Caco-2 (cell line): ENCODE measurements at regions of chr17 and their contacts with region 1.

Region 1: DNA sequence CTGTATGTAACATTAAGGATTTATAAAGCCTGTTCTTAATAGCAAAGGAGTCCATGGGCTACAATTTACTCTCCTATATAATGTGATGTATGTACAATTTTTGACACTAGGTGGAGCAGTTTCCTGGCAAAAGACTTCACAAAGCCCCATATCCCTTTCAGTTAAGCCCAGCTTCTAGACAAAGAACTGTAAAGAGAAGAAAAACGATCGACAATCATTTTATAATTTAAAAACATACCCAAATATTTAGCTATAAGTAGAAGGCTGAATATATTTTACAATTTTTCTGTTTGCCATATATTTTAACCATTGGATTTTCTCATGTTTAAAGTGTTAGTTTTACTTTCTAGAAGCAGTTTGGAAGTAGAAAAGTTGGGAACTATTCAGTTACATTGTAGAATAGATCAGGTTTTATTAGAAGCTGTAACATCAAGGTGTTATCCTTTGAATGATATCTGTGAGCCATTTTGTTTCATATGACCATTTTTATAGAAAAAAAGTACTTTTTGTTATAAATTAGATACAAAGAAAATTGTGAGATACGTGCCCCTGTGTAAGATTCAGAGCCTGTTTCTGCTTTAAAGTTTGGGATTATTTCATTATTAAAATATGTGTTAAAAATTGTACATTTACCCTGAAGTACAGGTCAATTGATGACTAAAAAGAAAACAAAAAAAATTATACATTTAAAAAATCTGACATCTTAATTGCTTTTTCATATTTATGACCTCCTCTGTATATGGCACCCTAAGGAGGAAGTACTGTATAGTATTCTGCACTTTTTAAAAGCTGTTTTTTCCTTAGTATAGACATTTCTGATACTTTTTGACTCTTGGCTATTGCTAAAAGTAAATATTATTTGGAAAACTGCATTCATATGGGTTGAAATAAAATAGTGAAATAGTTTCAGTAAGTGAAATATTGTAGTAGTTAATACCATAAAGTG is 46.3 kb downstream of the VMP1 start:
- DNase-seq: peak in 1 of 2 experiments; percentile 77
- H3K4me3 ChIP-seq: no peak overlapping the region
- H3K4me3 Mint-ChIP-seq: peak overlapping the region; percentile 60
- H3K27ac Mint-ChIP-seq: peak overlapping the region; percentile 89
- H3K4me1 ChIP-seq: peaks cover 45% of the 10 kb centered on the region
- H3K4me1 Mint-ChIP-seq: peaks cover 45% of the 10 kb centered on the region
- H3K27me3 ChIP-seq: no peaks in the 10 kb centered on the region
- H3K27me3 Mint-ChIP-seq: no peaks in the 10 kb centered on the region
- CTCF ChIP-seq: peak; percentile 62 to 64

Region 2: GRCh38 chr17:59695945-59696692 is 57.7 kb before region 1 on chr17:
- CTCF ChIA-PET with region 1: no interaction called
- POLR2A ChIA-PET with region 1: no interaction called
- intact Hi-C with region 1: no loop called
- DNase-seq: no peak
- H3K4me3 ChIP-seq: no peak overlapping the region
- H3K4me3 Mint-ChIP-seq: no peak overlapping the region
- H3K27ac Mint-ChIP-seq: peak overlapping the region; percentile 18
- H3K4me1 ChIP-seq: no peaks in the 10 kb centered on the region
- H3K4me1 Mint-ChIP-seq: peaks cover 6% of the 10 kb centered on the region
- H3K27me3 ChIP-seq: no peaks in the 10 kb centered on the region
- H3K27me3 Mint-ChIP-seq: no peaks in the 10 kb centered on the region
- CTCF ChIP-seq: no peak

Region 3: DNA sequence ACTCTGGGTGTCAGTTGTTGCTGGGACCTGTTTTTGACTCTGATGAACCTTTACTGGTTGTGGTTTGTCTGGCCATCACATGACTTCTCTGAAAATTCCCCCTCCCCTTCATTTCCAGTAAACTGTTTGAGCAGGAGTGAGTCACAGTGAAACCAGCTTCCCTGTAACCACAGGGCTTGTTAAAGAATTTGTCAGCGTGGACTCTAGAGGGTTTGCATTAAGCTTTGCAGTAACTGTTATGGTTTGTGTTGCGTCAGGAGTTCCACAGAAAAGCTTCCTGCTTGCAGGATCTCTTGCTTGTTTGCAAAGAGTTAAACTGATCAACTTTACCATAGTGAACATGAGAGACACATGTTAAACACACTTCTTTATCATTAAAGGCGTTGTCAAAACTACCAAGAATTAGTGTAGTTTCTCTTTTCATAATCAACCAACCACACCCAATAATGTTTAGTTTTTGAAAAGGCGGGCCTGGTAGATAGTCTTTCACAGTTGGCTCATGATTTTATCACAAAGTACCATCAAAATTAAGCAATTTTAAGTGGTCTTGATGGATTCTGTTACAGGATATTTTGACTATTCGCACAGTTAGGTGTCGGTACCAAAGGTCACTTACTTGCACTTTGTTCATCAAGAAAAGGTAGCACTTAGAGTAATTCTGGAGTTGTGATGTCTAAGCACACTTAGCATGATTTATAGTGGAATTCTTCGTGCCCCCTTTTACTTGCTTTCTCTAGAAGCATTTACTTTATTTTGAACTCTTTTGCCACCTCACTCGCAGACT is 32.9 kb after region 1 on chr17:
- CTCF ChIA-PET with region 1: interaction called, 8 read pairs
- POLR2A ChIA-PET with region 1: interaction called, 9 read pairs
- intact Hi-C with region 1: loop called (anchors 1 kb)
- DNase-seq: peak; percentile 91 to 93
- H3K4me3 ChIP-seq: peak overlapping the region; percentile 1; the same call in 1 of the 2 replicates
- H3K4me3 Mint-ChIP-seq: peak overlapping the region; percentile 46
- H3K27ac Mint-ChIP-seq: peak overlapping the region; percentile 76
- H3K4me1 ChIP-seq: peaks cover 70% of the 10 kb centered on the region
- H3K4me1 Mint-ChIP-seq: peaks cover 32% of the 10 kb centered on the region
- H3K27me3 ChIP-seq: no peaks in the 10 kb centered on the region
- H3K27me3 Mint-ChIP-seq: no peaks in the 10 kb centered on the region
- CTCF ChIP-seq: no peak

Region 4: GRCh38 chr17:59796785-59797205 is 43.0 kb after region 1 on chr17:
- CTCF ChIA-PET with region 1: no interaction called
- POLR2A ChIA-PET with region 1: no interaction called
- intact Hi-C with region 1: no loop called
- DNase-seq: no peak
- H3K4me3 ChIP-seq: no peak overlapping the region
- H3K4me3 Mint-ChIP-seq: no peak overlapping the region
- H3K27ac Mint-ChIP-seq: no peak overlapping the region
- H3K4me1 ChIP-seq: peaks cover 8% of the 10 kb centered on the region
- H3K4me1 Mint-ChIP-seq: peaks cover 7% of the 10 kb centered on the region
- H3K27me3 ChIP-seq: no peaks in the 10 kb centered on the region
- H3K27me3 Mint-ChIP-seq: no peaks in the 10 kb centered on the region
- CTCF ChIP-seq: no peak

Region 5: DNA sequence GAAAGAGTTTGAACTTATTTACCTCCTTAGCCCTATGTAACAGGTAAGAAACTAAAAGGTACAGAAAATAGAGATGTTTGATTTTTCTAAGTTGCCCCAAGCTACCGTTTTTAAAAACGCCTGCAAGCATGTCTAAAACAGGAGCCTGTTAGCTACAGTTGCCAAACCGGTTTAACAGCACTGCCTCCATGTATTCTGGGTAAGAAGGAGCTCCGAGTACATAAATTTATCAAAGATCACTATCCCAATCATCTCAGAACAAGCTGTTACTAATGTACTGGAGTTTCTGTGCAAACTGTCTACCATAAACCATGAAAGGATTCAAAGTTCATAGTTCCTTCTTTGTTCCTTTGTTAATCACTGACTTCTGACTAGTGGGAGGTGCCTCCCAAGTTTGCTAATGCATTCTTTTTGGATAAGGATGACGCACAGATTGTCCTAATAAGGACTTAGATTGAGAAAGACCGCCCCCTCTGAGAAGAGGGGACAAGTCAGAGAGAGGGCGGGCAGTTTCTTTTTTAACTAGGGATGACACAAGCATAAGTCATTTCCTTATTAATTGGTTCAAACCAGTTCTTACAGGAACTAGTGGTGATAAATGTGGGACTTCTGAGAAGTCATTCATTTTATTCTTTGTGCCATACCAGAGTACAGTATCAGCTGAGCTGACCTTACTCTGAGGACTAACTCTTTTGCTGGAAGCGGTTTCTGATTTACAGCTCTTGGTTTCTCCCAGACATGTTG is 83.7 kb after region 1 on chr17:
- CTCF ChIA-PET with region 1: interaction called, 23 read pairs
- POLR2A ChIA-PET with region 1: interaction called, 17 read pairs
- intact Hi-C with region 1: loop called (anchors 1 kb)
- DNase-seq: peak; percentile 95 to 96
- H3K4me3 ChIP-seq: peak overlapping the region; percentile 49
- H3K4me3 Mint-ChIP-seq: peak overlapping the region; percentile 89
- H3K27ac Mint-ChIP-seq: peak overlapping the region; percentile 98
- H3K4me1 ChIP-seq: peaks cover 30% of the 10 kb centered on the region
- H3K4me1 Mint-ChIP-seq: peaks cover 41% of the 10 kb centered on the region
- H3K27me3 ChIP-seq: no peaks in the 10 kb centered on the region
- H3K27me3 Mint-ChIP-seq: peaks cover 2% of the 10 kb centered on the region
- CTCF ChIP-seq: no peak

Region 6: GRCh38 chr17:59853168-59853918 is 99.5 kb after region 1 on chr17:
- CTCF ChIA-PET with region 1: interaction called, 21 read pairs
- POLR2A ChIA-PET with region 1: interaction called, 3 read pairs
- intact Hi-C with region 1: loop called (anchors 1 kb)
- DNase-seq: peak; percentile 92
- H3K4me3 ChIP-seq: no peak overlapping the region
- H3K4me3 Mint-ChIP-seq: peak overlapping the region; percentile 68
- H3K27ac Mint-ChIP-seq: peak overlapping the region; percentile 97
- H3K4me1 ChIP-seq: peaks cover 78% of the 10 kb centered on the region
- H3K4me1 Mint-ChIP-seq: peaks cover 50% of the 10 kb centered on the region
- H3K27me3 ChIP-seq: no peaks in the 10 kb centered on the region
- H3K27me3 Mint-ChIP-seq: no peaks in the 10 kb centered on the region
- CTCF ChIP-seq: peak; percentile 77 to 78

Region 7: GRCh38 chr17:59914274-59914854 is 160.6 kb after region 1 on chr17:
- CTCF ChIA-PET with region 1: no interaction called
- POLR2A ChIA-PET with region 1: no interaction called
- intact Hi-C with region 1: no loop called
- DNase-seq: peak in 1 of 2 experiments; percentile 50
- H3K4me3 ChIP-seq: no peak overlapping the region
- H3K4me3 Mint-ChIP-seq: no peak overlapping the region
- H3K27ac Mint-ChIP-seq: no peak overlapping the region
- H3K4me1 ChIP-seq: no peaks in the 10 kb centered on the region
- H3K4me1 Mint-ChIP-seq: no peaks in the 10 kb centered on the region
- H3K27me3 ChIP-seq: no peaks in the 10 kb centered on the region
- H3K27me3 Mint-ChIP-seq: no peaks in the 10 kb centered on the region
- CTCF ChIP-seq: peak; percentile 43 to 58

Region 8: GRCh38 chr17:60036796-60037612 is 283.2 kb after region 1 on chr17:
- CTCF ChIA-PET with region 1: interaction called, 3 read pairs
- POLR2A ChIA-PET with region 1: no interaction called
- intact Hi-C with region 1: loop called (anchors 5 kb)
- DNase-seq: peak; percentile 78 to 82
- H3K4me3 ChIP-seq: no peak overlapping the region
- H3K4me3 Mint-ChIP-seq: no peak overlapping the region
- H3K27ac Mint-ChIP-seq: no peak overlapping the region
- H3K4me1 ChIP-seq: no peaks in the 10 kb centered on the region; the same call in 1 of the 2 replicates
- H3K4me1 Mint-ChIP-seq: no peaks in the 10 kb centered on the region
- H3K27me3 ChIP-seq: no peaks in the 10 kb centered on the region
- H3K27me3 Mint-ChIP-seq: peaks cover 3% of the 10 kb centered on the region
- CTCF ChIP-seq: peak; percentile 89 to 97